A549 (cell line): ENCODE measurements at regions of chr19 and their contacts with region 1.

Region 1: GRCh38 chr19:32224371-32225244 is 120.8 kb upstream of the ZNF507 start:
- DNase-seq: peak; percentile 71 to 91
- ATAC-seq: peak; percentile 82 to 96
- H3K4me3 ChIP-seq: no peak overlapping the region
- H3K27ac ChIP-seq: no peak overlapping the region
- H3K4me1 ChIP-seq: no peaks in the 10 kb centered on the region
- CTCF ChIP-seq: peak; percentile 100
- EP300 ChIP-seq: no peak
- POLR2A ChIP-seq: no peak
- RAD21 ChIP-seq: peak; percentile 94 to 100

Region 2: DNA sequence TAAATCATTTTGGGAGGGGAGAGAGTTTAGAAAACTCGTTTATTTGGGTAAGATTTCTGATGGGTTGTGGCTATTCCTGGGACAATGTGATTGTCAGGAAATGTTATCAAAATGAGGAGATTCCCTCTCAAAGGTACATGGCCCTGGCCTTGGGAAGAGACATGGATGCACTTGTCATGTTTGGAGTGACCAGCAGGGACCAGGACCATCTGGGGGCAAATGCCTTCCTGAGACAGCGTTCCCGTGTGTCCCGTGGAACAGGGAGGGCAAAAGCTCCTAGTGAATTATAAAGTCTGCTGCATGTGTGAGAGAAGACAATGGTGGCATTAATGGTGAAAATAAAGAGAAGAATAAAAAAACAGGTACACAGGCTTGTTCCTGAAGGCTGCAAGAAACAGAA is 1535.1 kb before region 1 on chr19:
- CTCF ChIA-PET with region 1: interaction called, 74 read pairs
- POLR2A ChIA-PET with region 1: no interaction called
- DNase-seq: no peak
- ATAC-seq: peak; percentile 48 to 59; a peak in 4 of 6 replicates
- H3K4me3 ChIP-seq: no peak overlapping the region
- H3K27ac ChIP-seq: no peak overlapping the region
- H3K4me1 ChIP-seq: no peaks in the 10 kb centered on the region
- CTCF ChIP-seq: no peak
- EP300 ChIP-seq: no peak
- POLR2A ChIP-seq: no peak
- RAD21 ChIP-seq: no peak

Region 3: GRCh38 chr19:32154418-32154817 is 70.2 kb before region 1 on chr19:
- CTCF ChIA-PET with region 1: no interaction called
- POLR2A ChIA-PET with region 1: no interaction called
- DNase-seq: no peak
- ATAC-seq: no peak
- H3K4me3 ChIP-seq: no peak overlapping the region
- H3K27ac ChIP-seq: no peak overlapping the region
- H3K4me1 ChIP-seq: no peaks in the 10 kb centered on the region
- CTCF ChIP-seq: no peak
- EP300 ChIP-seq: no peak
- POLR2A ChIP-seq: no peak
- RAD21 ChIP-seq: no peak

Region 4: GRCh38 chr19:32174386-32175113 is 50.1 kb before region 1 on chr19:
- CTCF ChIA-PET with region 1: interaction called, 20 read pairs
- POLR2A ChIA-PET with region 1: no interaction called
- DNase-seq: no peak
- ATAC-seq: no peak
- H3K4me3 ChIP-seq: no peak overlapping the region
- H3K27ac ChIP-seq: no peak overlapping the region
- H3K4me1 ChIP-seq: no peaks in the 10 kb centered on the region
- CTCF ChIP-seq: no peak
- EP300 ChIP-seq: no peak
- POLR2A ChIP-seq: no peak
- RAD21 ChIP-seq: no peak

Region 5: GRCh38 chr19:32201636-32202051 is 23.0 kb before region 1 on chr19:
- CTCF ChIA-PET with region 1: interaction called, 21 read pairs
- POLR2A ChIA-PET with region 1: no interaction called
- DNase-seq: no peak
- ATAC-seq: no peak
- H3K4me3 ChIP-seq: no peak overlapping the region
- H3K27ac ChIP-seq: no peak overlapping the region
- H3K4me1 ChIP-seq: no peaks in the 10 kb centered on the region
- CTCF ChIP-seq: no peak
- EP300 ChIP-seq: no peak
- POLR2A ChIP-seq: no peak
- RAD21 ChIP-seq: no peak

Region 6: DNA sequence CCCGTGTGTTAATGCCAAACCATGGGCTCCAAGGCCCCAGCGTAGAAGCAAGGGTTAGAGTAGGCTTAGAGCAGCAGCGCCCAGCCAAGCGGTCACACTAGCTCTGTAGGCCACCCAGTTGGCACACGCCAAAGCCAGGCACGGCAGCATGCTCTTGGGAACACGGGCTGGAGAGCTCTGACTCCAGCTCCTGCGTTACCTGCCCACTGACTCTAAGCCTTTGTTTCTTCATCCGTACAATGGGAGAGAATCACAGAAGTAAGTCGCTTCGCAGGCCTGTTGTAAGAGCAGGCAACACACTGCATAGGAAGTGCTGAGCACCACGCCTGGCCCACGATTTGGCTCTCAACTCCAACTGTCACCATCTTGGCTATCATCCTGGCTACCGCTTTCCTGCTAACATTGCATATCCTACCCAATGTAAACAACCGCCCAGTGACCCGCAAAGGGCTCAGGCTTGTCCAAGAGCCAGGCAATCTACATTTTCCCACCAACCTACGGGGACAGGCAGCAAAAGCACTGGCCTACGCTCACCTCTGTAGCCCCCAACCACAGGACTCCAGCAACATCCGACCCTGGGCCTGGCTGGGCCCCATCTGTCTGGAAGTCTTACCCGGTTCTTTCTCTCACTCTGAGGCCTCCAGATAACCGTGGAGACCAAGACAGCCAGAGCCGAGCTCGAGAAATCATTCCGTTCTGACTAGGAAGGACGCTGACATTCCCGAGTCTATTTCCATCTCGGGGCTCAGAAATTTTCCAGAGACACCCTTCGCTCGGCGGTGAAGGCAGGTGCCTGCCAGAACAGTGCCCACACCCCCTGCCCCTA is 29.3 kb after region 1 on chr19:
- CTCF ChIA-PET with region 1: interaction called, 13 read pairs
- POLR2A ChIA-PET with region 1: no interaction called
- DNase-seq: no peak
- ATAC-seq: no peak
- H3K4me3 ChIP-seq: no peak overlapping the region
- H3K27ac ChIP-seq: no peak overlapping the region
- H3K4me1 ChIP-seq: no peaks in the 10 kb centered on the region
- CTCF ChIP-seq: no peak
- EP300 ChIP-seq: no peak
- POLR2A ChIP-seq: no peak
- RAD21 ChIP-seq: no peak

Region 7: GRCh38 chr19:32367948-32368536 is 143.4 kb after region 1 on chr19:
- CTCF ChIA-PET with region 1: no interaction called
- POLR2A ChIA-PET with region 1: no interaction called
- DNase-seq: no peak
- ATAC-seq: no peak
- H3K4me3 ChIP-seq: no peak overlapping the region
- H3K27ac ChIP-seq: peak overlapping the region in 1 of 2 experiments; percentile 30; a peak in 3 of 6 replicates
- H3K4me1 ChIP-seq: peaks cover 39% of the 10 kb centered on the region
- CTCF ChIP-seq: no peak
- EP300 ChIP-seq: no peak
- POLR2A ChIP-seq: no peak
- RAD21 ChIP-seq: no peak

Region 8: GRCh38 chr19:32397526-32398135 is 173.0 kb after region 1 on chr19:
- CTCF ChIA-PET with region 1: no interaction called
- POLR2A ChIA-PET with region 1: no interaction called
- DNase-seq: peak in 1 of 2 experiments; percentile 45
- ATAC-seq: peak; percentile 60 to 70; a peak in 4 of 6 replicates
- H3K4me3 ChIP-seq: no peak overlapping the region
- H3K27ac ChIP-seq: no peak overlapping the region
- H3K4me1 ChIP-seq: peaks cover 9% of the 10 kb centered on the region
- CTCF ChIP-seq: no peak
- EP300 ChIP-seq: no peak
- POLR2A ChIP-seq: no peak
- RAD21 ChIP-seq: no peak